ENCODE measurements at regions of chr10 and their contacts with region 1.

Region 1: DNA sequence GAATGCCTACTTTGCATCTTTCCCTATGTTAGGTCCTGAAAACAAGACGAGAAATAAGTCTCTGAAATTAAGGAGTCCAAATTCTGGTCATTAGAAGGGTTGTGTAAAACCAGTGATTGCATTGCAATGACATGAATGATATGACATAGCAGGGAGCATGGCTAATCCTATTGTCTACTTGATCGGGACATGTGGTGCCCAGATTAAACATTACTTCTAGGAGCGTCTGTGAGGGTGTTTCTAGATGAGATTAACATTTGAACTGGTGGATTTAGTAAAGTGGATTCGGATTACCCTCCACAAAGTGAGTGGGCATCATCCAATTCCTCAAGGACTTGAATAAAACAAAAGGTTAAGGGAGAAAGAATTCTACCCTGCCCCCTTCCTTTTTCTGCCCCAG is 434.9 kb upstream of the KLF6 start:
- DNase-seq: no peak
- H3K4me3 Mint-ChIP-seq: no peak overlapping the region
- H3K27ac Mint-ChIP-seq: no peak overlapping the region
- H3K4me1 Mint-ChIP-seq: peaks cover 21% of the 10 kb centered on the region
- H3K27me3 Mint-ChIP-seq: peaks cover 4% of the 10 kb centered on the region

Region 2: GRCh38 chr10:4174197-4174596 is 45.7 kb before region 1 on chr10:
- CTCF ChIA-PET with region 1: no interaction called
- intact Hi-C with region 1: no loop called
- DNase-seq: peak; percentile 12
- H3K4me3 Mint-ChIP-seq: no peak overlapping the region
- H3K27ac Mint-ChIP-seq: no peak overlapping the region
- H3K4me1 Mint-ChIP-seq: no peaks in the 10 kb centered on the region
- H3K27me3 Mint-ChIP-seq: no peaks in the 10 kb centered on the region

Region 3: DNA sequence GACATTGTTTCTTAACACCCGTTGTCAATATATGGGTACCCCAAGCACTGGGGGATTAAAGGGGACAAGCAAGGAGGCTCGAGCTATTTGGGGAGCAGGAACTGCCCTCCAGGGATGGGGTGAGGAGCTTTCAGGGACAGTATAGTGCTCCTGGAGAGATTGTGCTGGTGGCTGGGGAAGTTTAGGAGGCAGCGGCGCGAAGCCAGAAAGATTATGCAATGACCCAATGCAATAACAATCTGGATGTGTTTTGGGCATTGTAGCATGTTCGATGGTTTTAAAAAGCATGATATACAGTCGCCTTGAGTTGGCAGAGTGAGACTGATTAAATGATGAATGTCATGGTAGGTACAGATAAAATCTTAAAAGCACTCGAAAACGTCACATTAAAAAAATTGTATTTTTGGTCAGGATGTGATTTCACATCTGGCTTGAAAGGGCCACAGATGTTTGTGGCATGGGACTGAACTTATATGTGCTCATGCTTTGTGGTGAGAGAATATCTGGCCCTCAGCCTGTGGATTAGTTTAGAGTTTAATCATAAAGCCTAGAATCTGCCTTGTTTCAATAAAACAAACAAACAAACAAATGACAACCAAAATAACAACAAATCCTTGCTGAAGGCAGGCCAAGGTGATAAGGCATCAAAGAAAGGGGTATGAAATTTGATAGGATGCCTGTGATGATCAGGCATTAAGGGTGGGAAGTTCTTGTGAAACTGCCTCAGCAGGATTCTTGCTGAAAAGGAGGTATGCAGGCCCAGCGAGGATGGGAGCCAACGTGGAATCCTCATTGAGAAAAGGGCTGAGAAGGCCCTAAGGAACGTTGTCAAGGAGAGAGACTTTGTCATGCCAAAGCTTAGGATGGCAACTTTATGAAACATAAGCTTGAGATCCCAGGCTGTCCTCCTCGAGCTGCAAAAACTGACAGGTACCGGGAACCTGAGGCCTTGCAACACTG is 17.8 kb before region 1 on chr10:
- CTCF ChIA-PET with region 1: no interaction called
- intact Hi-C with region 1: no loop called
- DNase-seq: no peak
- H3K4me3 Mint-ChIP-seq: no peak overlapping the region
- H3K27ac Mint-ChIP-seq: no peak overlapping the region
- H3K4me1 Mint-ChIP-seq: peaks cover 4% of the 10 kb centered on the region
- H3K27me3 Mint-ChIP-seq: peaks cover 1% of the 10 kb centered on the region

Region 4: GRCh38 chr10:4241724-4242345 is 21.9 kb after region 1 on chr10:
- CTCF ChIA-PET with region 1: no interaction called
- intact Hi-C with region 1: loop called (anchors 2 kb)
- DNase-seq: no peak
- H3K4me3 Mint-ChIP-seq: no peak overlapping the region
- H3K27ac Mint-ChIP-seq: no peak overlapping the region
- H3K4me1 Mint-ChIP-seq: peaks cover 27% of the 10 kb centered on the region
- H3K27me3 Mint-ChIP-seq: peaks cover 2% of the 10 kb centered on the region

Measured in activated naive CD4-positive, alpha-beta T cell treated with anti-CD3 and anti-CD28 coated beads for 36 hours (primary cell).